Caco-2 (cell line): ENCODE measurements at regions of chr3 and their contacts with region 1.

Region 1: GRCh38 chr3:24521420-24522145 is 26.9 kb upstream of the THRB start:
- DNase-seq: peak; percentile 63 to 67
- H3K4me3 ChIP-seq: peak overlapping the region; percentile 51
- H3K4me3 Mint-ChIP-seq: peak overlapping the region; percentile 79
- H3K27ac Mint-ChIP-seq: no peak overlapping the region
- H3K4me1 ChIP-seq: peaks cover 41% of the 10 kb centered on the region
- H3K4me1 Mint-ChIP-seq: peaks cover 33% of the 10 kb centered on the region
- H3K27me3 ChIP-seq: no peaks in the 10 kb centered on the region
- H3K27me3 Mint-ChIP-seq: no peaks in the 10 kb centered on the region
- CTCF ChIP-seq: peak in 1 of 2 experiments; percentile 1

Region 2: GRCh38 chr3:24538891-24539290 is 17.3 kb after region 1 on chr3:
- CTCF ChIA-PET with region 1: no interaction called
- POLR2A ChIA-PET with region 1: no interaction called
- intact Hi-C with region 1: no loop called
- DNase-seq: no peak
- H3K4me3 ChIP-seq: no peak overlapping the region
- H3K4me3 Mint-ChIP-seq: no peak overlapping the region
- H3K27ac Mint-ChIP-seq: no peak overlapping the region
- H3K4me1 ChIP-seq: no peaks in the 10 kb centered on the region
- H3K4me1 Mint-ChIP-seq: peaks cover 6% of the 10 kb centered on the region
- H3K27me3 ChIP-seq: no peaks in the 10 kb centered on the region
- H3K27me3 Mint-ChIP-seq: no peaks in the 10 kb centered on the region
- CTCF ChIP-seq: no peak

Region 3: GRCh38 chr3:24550588-24550987 is 29.0 kb after region 1 on chr3:
- CTCF ChIA-PET with region 1: no interaction called
- POLR2A ChIA-PET with region 1: no interaction called
- intact Hi-C with region 1: loop called (anchors 2 kb)
- DNase-seq: peak in 1 of 2 experiments; percentile 8
- H3K4me3 ChIP-seq: no peak overlapping the region
- H3K4me3 Mint-ChIP-seq: no peak overlapping the region
- H3K27ac Mint-ChIP-seq: no peak overlapping the region
- H3K4me1 ChIP-seq: no peaks in the 10 kb centered on the region
- H3K4me1 Mint-ChIP-seq: peaks cover 9% of the 10 kb centered on the region
- H3K27me3 ChIP-seq: no peaks in the 10 kb centered on the region; the same call in 1 of the 2 replicates
- H3K27me3 Mint-ChIP-seq: no peaks in the 10 kb centered on the region
- CTCF ChIP-seq: no peak

Region 4: GRCh38 chr3:24591661-24592522 is 70.3 kb after region 1 on chr3:
- CTCF ChIA-PET with region 1: no interaction called
- POLR2A ChIA-PET with region 1: no interaction called
- intact Hi-C with region 1: loop called (anchors 1 kb)
- DNase-seq: peak; percentile 51 to 54
- H3K4me3 ChIP-seq: no peak overlapping the region
- H3K4me3 Mint-ChIP-seq: peak overlapping the region; percentile 39
- H3K27ac Mint-ChIP-seq: peak overlapping the region; percentile 33
- H3K4me1 ChIP-seq: peaks cover 41% of the 10 kb centered on the region
- H3K4me1 Mint-ChIP-seq: peaks cover 61% of the 10 kb centered on the region
- H3K27me3 ChIP-seq: no peaks in the 10 kb centered on the region
- H3K27me3 Mint-ChIP-seq: no peaks in the 10 kb centered on the region
- CTCF ChIP-seq: no peak

Region 5: GRCh38 chr3:24598695-24599470 is 77.3 kb after region 1 on chr3:
- CTCF ChIA-PET with region 1: no interaction called
- POLR2A ChIA-PET with region 1: no interaction called
- intact Hi-C with region 1: loop called (anchors 1 kb)
- DNase-seq: peak; percentile 67 to 72
- H3K4me3 ChIP-seq: no peak overlapping the region
- H3K4me3 Mint-ChIP-seq: peak overlapping the region; percentile 47
- H3K27ac Mint-ChIP-seq: peak overlapping the region; percentile 79
- H3K4me1 ChIP-seq: peaks cover 33% of the 10 kb centered on the region
- H3K4me1 Mint-ChIP-seq: peaks cover 22% of the 10 kb centered on the region
- H3K27me3 ChIP-seq: no peaks in the 10 kb centered on the region
- H3K27me3 Mint-ChIP-seq: no peaks in the 10 kb centered on the region
- CTCF ChIP-seq: no peak

Region 6: GRCh38 chr3:24614361-24614760 is 92.8 kb after region 1 on chr3:
- CTCF ChIA-PET with region 1: no interaction called
- POLR2A ChIA-PET with region 1: no interaction called
- intact Hi-C with region 1: no loop called
- DNase-seq: no peak
- H3K4me3 ChIP-seq: no peak overlapping the region
- H3K4me3 Mint-ChIP-seq: no peak overlapping the region
- H3K27ac Mint-ChIP-seq: no peak overlapping the region
- H3K4me1 ChIP-seq: peaks cover 10% of the 10 kb centered on the region; the same call in 1 of the 2 replicates
- H3K4me1 Mint-ChIP-seq: peaks cover 10% of the 10 kb centered on the region
- H3K27me3 ChIP-seq: no peaks in the 10 kb centered on the region
- H3K27me3 Mint-ChIP-seq: no peaks in the 10 kb centered on the region
- CTCF ChIP-seq: no peak

Region 7: DNA sequence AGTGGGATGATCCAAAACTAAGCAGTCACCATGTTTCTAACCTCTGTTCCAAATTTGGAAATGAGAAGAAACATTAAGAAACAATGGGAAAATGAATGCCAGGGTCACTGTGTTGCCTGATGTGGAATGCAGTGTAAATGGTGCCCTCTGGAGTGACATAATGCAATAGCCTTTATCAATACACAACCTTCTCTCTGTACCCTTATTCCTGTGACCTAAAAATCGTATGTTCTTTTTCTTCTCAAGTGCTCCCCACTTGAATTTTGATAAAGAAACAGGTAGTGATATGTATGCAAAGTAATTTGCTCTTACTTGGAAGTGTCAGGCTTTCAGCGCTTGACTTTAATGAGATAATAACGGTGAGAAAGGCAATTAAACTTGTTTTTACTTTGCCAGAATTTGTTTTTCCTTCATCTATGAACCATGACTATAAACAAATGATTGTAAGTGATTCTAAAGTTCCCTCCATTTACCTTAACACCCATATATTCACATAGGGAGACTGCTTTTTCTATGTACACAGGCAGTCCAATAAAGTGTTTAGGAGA is 118.8 kb after region 1 on chr3:
- CTCF ChIA-PET with region 1: no interaction called
- POLR2A ChIA-PET with region 1: no interaction called
- intact Hi-C with region 1: loop called (anchors 2 kb)
- DNase-seq: peak in 1 of 2 experiments; percentile 32
- H3K4me3 ChIP-seq: no peak overlapping the region
- H3K4me3 Mint-ChIP-seq: no peak overlapping the region
- H3K27ac Mint-ChIP-seq: peak overlapping the region; percentile 60
- H3K4me1 ChIP-seq: peaks cover 29% of the 10 kb centered on the region
- H3K4me1 Mint-ChIP-seq: peaks cover 15% of the 10 kb centered on the region
- H3K27me3 ChIP-seq: no peaks in the 10 kb centered on the region
- H3K27me3 Mint-ChIP-seq: no peaks in the 10 kb centered on the region
- CTCF ChIP-seq: peak; percentile 49 to 69